Pancreas (tissue), 10 donors: ENCODE measurements at regions of chr15 and their contacts with region 1.

Region 1: DNA sequence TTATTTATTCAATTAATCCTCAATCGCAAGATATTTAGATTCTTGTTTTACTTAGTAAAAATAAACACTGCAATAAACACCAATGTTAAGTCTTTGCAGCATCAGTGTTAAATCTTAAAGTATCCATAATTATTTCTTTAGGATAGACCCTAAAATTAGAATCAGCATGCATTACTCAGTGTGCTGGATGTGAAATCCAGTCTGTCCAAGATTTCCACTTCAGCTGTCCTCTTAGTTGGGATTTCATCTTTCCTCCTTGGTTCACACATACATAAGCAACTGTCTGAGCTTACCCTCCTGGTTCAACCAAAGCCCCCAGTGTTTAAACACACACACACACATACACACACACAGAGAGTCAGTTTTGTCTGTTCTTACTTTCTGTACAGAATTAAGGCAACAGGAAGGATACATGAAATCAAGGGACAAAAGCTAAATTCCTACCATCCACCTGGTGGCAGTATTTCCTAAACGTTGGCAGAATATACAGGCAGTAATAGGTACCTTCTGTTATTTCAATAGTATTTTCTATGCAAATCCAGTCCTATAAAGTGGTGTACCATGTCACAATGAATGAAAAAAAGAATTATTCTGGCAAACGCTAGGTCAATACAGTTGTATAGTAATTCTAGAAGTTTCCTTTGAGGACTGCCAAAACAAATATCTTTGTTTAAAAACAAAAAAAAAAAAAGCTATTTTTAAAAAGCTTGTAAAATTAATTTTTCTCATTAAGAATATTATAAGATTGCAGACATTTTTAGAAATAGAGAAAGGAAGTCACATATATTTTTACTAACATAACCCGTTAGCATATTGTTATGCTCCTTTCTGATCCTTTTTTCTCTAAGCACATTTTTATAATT is 27.3 kb upstream of the DMXL2 start:
- DNase-seq: peak in 3 of 6 donors; percentile 20 to 52 (median 37)
- ATAC-seq: peak; percentile 72 to 95 (median 93)
- H3K4me3 ChIP-seq: no peak overlapping the region
- H3K27ac ChIP-seq: no peak overlapping the region
- H3K4me1 ChIP-seq: no peaks in the 10 kb centered on the region
- H3K27me3 ChIP-seq: no peaks in the 10 kb centered on the region
- CTCF ChIP-seq: peak; percentile 18 to 54 (median 38)

Region 2: GRCh38 chr15:51759557-51760070 is 109.7 kb after region 1 on chr15:
- intact Hi-C with region 1: loop called in 1 of 3 experiments (anchors 10 kb)
- DNase-seq: peak in 1 of 6 donors; percentile 12
- ATAC-seq: peak in 3 of 4 donors; percentile 58 to 69 (median 68)
- H3K4me3 ChIP-seq: no peak overlapping the region
- H3K27ac ChIP-seq: no peak overlapping the region
- H3K4me1 ChIP-seq: no peaks in the 10 kb centered on the region
- H3K27me3 ChIP-seq: no peaks in the 10 kb centered on the region
- CTCF ChIP-seq: no peak

Region 3: GRCh38 chr15:51771773-51772172 is 121.9 kb after region 1 on chr15:
- intact Hi-C with region 1: loop called (anchors 5 to 10 kb)
- DNase-seq: no peak
- ATAC-seq: peak in 2 of 4 donors; percentile 28 to 38
- H3K4me3 ChIP-seq: no peak overlapping the region
- H3K27ac ChIP-seq: no peak overlapping the region
- H3K4me1 ChIP-seq: no peaks in the 10 kb centered on the region
- H3K27me3 ChIP-seq: no peaks in the 10 kb centered on the region
- CTCF ChIP-seq: no peak

Region 4: GRCh38 chr15:51924156-51925068 is 274.5 kb after region 1 on chr15:
- intact Hi-C with region 1: no loop called
- DNase-seq: no peak
- ATAC-seq: peak in 1 of 4 donors; percentile 63
- H3K4me3 ChIP-seq: no peak overlapping the region
- H3K27ac ChIP-seq: no peak overlapping the region
- H3K4me1 ChIP-seq: no peaks in the 10 kb centered on the region
- H3K27me3 ChIP-seq: no peaks in the 10 kb centered on the region
- CTCF ChIP-seq: no peak